K562 (cell line): ENCODE measurements at regions of chr16 and their contacts with region 1.

Region 1: GRCh38 chr16:89987169-89987568 is 32.1 kb downstream of the DBNDD1 start:
- DNase-seq: no peak
- ATAC-seq: peak; percentile 39; the same call in 1 of the 3 replicates
- H3K4me3 ChIP-seq: no peak overlapping the region
- H3K27ac ChIP-seq: no peak overlapping the region
- H3K4me1 ChIP-seq: no peaks in the 10 kb centered on the region; a peak in 1 of 5 replicates
- H3K27me3 ChIP-seq: no peaks in the 10 kb centered on the region
- CTCF ChIP-seq: no peak
- EP300 ChIP-seq: no peak
- POLR2A ChIP-seq: no peak
- RAD21 ChIP-seq: no peak

Region 2: GRCh38 chr16:89972244-89973234 is 14.6 kb before region 1 on chr16:
- CTCF ChIA-PET with region 1: no interaction called
- POLR2A ChIA-PET with region 1: interaction called, 15 read pairs
- in situ Hi-C with region 1: no loop called
- intact Hi-C with region 1: no loop called
- DNase-seq: peak; percentile 96 to 100 (median 100)
- ATAC-seq: peak; percentile 91
- H3K4me3 ChIP-seq: peak overlapping the region; percentile 93
- H3K27ac ChIP-seq: peak overlapping the region; percentile 99
- H3K4me1 ChIP-seq: peaks cover 23 to 30% of the 10 kb centered on the region in 2 experiments; a peak in 4 of 5 replicates
- H3K27me3 ChIP-seq: no peaks in the 10 kb centered on the region
- CTCF ChIP-seq: peak in 1 of 3 experiments; percentile 26; a peak in 1 of 6 replicates
- EP300 ChIP-seq: no peak
- POLR2A ChIP-seq: peak; percentile 97
- RAD21 ChIP-seq: no peak

Region 3: GRCh38 chr16:90005956-90006663 is 18.9 kb after region 1 on chr16:
- CTCF ChIA-PET with region 1: no interaction called
- POLR2A ChIA-PET with region 1: no interaction called
- in situ Hi-C with region 1: no loop called
- intact Hi-C with region 1: no loop called
- DNase-seq: no peak
- ATAC-seq: no peak
- H3K4me3 ChIP-seq: no peak overlapping the region
- H3K27ac ChIP-seq: no peak overlapping the region
- H3K4me1 ChIP-seq: peaks cover 0 to 42% of the 10 kb centered on the region in 2 experiments; a peak in 3 of 5 replicates
- H3K27me3 ChIP-seq: no peaks in the 10 kb centered on the region
- CTCF ChIP-seq: no peak
- EP300 ChIP-seq: no peak
- POLR2A ChIP-seq: no peak
- RAD21 ChIP-seq: no peak